A673 (cell line): ENCODE measurements at regions of chr14 and their contacts with region 1.

Region 1: GRCh38 chr14:68843471-68844209 is 50.8 kb upstream of the ZFP36L1 start:
- DNase-seq: peak; percentile 78
- H3K4me3 ChIP-seq: peak overlapping the region; percentile 38
- H3K27ac ChIP-seq: no peak overlapping the region
- H3K4me1 ChIP-seq: no peaks in the 10 kb centered on the region
- H3K27me3 ChIP-seq: no peaks in the 10 kb centered on the region
- CTCF ChIP-seq: peak; percentile 97

Region 2: GRCh38 chr14:67934008-67934481 is 909.6 kb before region 1 on chr14:
- CTCF ChIA-PET with region 1: interaction called, 10 read pairs
- POLR2A ChIA-PET with region 1: no interaction called
- intact Hi-C with region 1: loop called (anchors 5 kb)
- DNase-seq: peak; percentile 94
- H3K4me3 ChIP-seq: no peak overlapping the region
- H3K27ac ChIP-seq: no peak overlapping the region
- H3K4me1 ChIP-seq: peaks cover 23% of the 10 kb centered on the region
- H3K27me3 ChIP-seq: peaks cover 12% of the 10 kb centered on the region
- CTCF ChIP-seq: peak; percentile 85

Region 3: DNA sequence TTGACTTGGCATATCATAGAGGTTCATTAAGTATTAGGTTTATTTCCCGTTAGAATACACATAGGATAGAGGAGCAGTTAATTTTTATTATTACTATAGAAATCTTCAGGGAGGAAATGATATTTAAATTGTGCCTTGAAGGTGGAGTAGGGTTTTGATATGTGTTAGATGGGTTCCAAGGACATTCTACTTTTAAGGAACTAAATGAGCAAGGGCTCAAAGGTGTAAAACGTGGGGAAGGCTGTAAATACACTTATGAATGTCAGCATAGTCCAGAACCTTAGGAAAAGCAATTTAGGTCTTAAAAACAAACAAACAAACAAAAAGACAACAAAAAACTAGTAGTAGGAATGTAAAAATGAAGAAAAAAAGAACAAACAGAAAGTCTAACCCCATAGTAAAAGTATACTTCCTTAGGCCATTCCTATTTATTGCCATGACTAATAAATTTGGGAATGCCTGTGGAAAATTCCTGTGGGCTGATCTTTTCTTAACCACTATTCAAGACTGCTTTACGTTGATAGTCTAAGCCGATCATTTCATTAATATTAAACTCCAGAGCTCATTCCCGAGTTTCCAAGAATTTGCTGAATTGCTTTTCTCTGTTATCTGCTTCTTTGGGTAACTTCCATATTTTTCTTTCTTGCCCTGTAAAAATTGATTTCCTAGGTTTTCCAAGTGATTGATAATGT is 843.8 kb before region 1 on chr14:
- CTCF ChIA-PET with region 1: interaction called, 19 read pairs
- POLR2A ChIA-PET with region 1: no interaction called
- intact Hi-C with region 1: no loop called
- DNase-seq: no peak
- H3K4me3 ChIP-seq: no peak overlapping the region
- H3K27ac ChIP-seq: no peak overlapping the region
- H3K4me1 ChIP-seq: no peaks in the 10 kb centered on the region
- H3K27me3 ChIP-seq: no peaks in the 10 kb centered on the region
- CTCF ChIP-seq: no peak

Region 4: GRCh38 chr14:68651652-68652367 is 191.8 kb before region 1 on chr14:
- CTCF ChIA-PET with region 1: no interaction called
- POLR2A ChIA-PET with region 1: no interaction called
- intact Hi-C with region 1: no loop called
- DNase-seq: no peak
- H3K4me3 ChIP-seq: no peak overlapping the region
- H3K27ac ChIP-seq: no peak overlapping the region
- H3K4me1 ChIP-seq: peaks cover 34% of the 10 kb centered on the region
- H3K27me3 ChIP-seq: no peaks in the 10 kb centered on the region
- CTCF ChIP-seq: no peak

Region 5: GRCh38 chr14:68704736-68705705 is 138.6 kb before region 1 on chr14:
- CTCF ChIA-PET with region 1: no interaction called
- POLR2A ChIA-PET with region 1: no interaction called
- intact Hi-C with region 1: no loop called
- DNase-seq: no peak
- H3K4me3 ChIP-seq: no peak overlapping the region
- H3K27ac ChIP-seq: no peak overlapping the region
- H3K4me1 ChIP-seq: no peaks in the 10 kb centered on the region
- H3K27me3 ChIP-seq: no peaks in the 10 kb centered on the region
- CTCF ChIP-seq: no peak